Ovary (tissue), 10 donors: ENCODE measurements at regions of chr17 and their contacts with region 1.

Region 1: GRCh38 chr17:66351053-66351452 is 48.6 kb downstream of the PRKCA start:
- DNase-seq: no peak
- H3K4me3 ChIP-seq: no peak overlapping the region
- H3K27ac ChIP-seq: no peak overlapping the region
- H3K4me1 ChIP-seq: peaks cover 17% of the 10 kb centered on the region
- H3K27me3 ChIP-seq: no peaks in the 10 kb centered on the region
- CTCF ChIP-seq: no peak
- EP300 ChIP-seq: no peak
- POLR2A ChIP-seq: no peak

Region 2: GRCh38 chr17:66268247-66268927 is 82.7 kb before region 1 on chr17:
- intact Hi-C with region 1: no loop called
- DNase-seq: no peak
- H3K4me3 ChIP-seq: no peak overlapping the region
- H3K27ac ChIP-seq: no peak overlapping the region
- H3K4me1 ChIP-seq: no peaks in the 10 kb centered on the region
- H3K27me3 ChIP-seq: no peaks in the 10 kb centered on the region
- CTCF ChIP-seq: no peak
- EP300 ChIP-seq: no peak
- POLR2A ChIP-seq: no peak

Region 3: GRCh38 chr17:66310528-66311148 is 40.4 kb before region 1 on chr17:
- intact Hi-C with region 1: loop called in 1 of 4 experiments (anchors 2 kb)
- DNase-seq: no peak
- H3K4me3 ChIP-seq: no peak overlapping the region
- H3K27ac ChIP-seq: no peak overlapping the region
- H3K4me1 ChIP-seq: peaks cover 3% of the 10 kb centered on the region
- H3K27me3 ChIP-seq: no peaks in the 10 kb centered on the region
- CTCF ChIP-seq: no peak
- EP300 ChIP-seq: no peak
- POLR2A ChIP-seq: no peak